ENCODE measurements at regions of chr17 and their contacts with region 1.

Region 1: GRCh38 chr17:18217412-18218015 is 7.9 kb upstream of the LLGL1 start:
- DNase-seq: peak; percentile 79
- H3K4me3 Mint-ChIP-seq: no peak overlapping the region
- H3K27ac Mint-ChIP-seq: no peak overlapping the region
- H3K4me1 Mint-ChIP-seq: no peaks in the 10 kb centered on the region
- H3K27me3 Mint-ChIP-seq: no peaks in the 10 kb centered on the region

Region 2: DNA sequence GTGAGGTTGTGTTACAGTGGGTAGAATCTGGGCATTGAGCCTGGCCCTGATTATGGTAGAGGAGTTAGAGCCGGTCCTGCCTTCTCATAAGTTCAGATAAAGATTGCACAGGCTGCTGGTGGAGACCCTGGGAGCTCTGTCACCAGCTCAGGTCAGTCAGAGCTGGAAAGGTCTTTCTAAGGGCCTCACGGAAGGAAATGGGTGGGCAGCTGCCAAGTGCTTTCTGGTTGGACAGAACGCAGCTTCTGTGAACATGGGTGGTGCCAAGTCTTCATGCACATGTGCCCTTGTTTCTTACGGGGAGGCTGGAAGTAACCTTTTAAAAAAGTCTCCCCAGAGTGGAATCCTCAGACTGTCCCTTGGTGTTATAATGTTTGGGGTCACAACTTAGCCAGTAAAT is 19.0 kb before region 1 on chr17:
- CTCF ChIA-PET with region 1: interaction called, 10 read pairs
- POLR2A ChIA-PET with region 1: no interaction called
- DNase-seq: no peak
- H3K4me3 Mint-ChIP-seq: no peak overlapping the region
- H3K27ac Mint-ChIP-seq: no peak overlapping the region
- H3K4me1 Mint-ChIP-seq: peaks cover 13% of the 10 kb centered on the region
- H3K27me3 Mint-ChIP-seq: no peaks in the 10 kb centered on the region

Region 3: DNA sequence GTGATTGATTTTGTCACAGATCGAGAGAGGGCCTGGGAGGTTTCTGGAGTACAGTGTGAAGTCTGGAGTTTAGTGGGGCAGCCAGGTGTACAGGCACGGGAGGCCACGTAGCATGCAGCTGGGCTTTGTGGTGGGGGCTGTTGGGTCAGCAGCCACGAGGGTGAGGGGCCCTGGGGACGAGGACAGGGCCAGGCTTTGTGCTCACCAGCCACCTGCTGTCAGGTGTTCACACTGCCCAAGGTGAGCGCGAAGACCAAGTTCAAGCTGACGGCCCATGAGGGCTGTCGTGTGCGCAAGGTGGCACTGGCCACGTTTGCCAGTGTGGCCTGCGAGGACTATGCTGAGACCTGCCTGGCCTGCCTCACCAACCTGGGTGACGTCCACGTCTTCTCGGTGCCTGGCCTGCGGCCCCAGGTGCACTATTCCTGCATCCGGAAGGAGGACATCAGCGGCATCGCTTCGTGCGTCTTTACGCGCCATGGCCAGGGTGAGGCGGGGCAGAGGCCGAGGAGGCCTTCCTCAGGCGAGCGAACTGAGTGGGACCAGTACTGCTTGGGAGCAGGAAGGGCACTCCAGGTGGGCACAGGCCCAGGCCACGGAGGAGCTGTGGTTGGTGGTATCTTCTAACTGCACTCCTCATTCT is 23.8 kb after region 1 on chr17:
- CTCF ChIA-PET with region 1: no interaction called
- POLR2A ChIA-PET with region 1: no interaction called
- DNase-seq: no peak
- H3K4me3 Mint-ChIP-seq: no peak overlapping the region
- H3K27ac Mint-ChIP-seq: no peak overlapping the region
- H3K4me1 Mint-ChIP-seq: no peaks in the 10 kb centered on the region
- H3K27me3 Mint-ChIP-seq: no peaks in the 10 kb centered on the region

Region 4: DNA sequence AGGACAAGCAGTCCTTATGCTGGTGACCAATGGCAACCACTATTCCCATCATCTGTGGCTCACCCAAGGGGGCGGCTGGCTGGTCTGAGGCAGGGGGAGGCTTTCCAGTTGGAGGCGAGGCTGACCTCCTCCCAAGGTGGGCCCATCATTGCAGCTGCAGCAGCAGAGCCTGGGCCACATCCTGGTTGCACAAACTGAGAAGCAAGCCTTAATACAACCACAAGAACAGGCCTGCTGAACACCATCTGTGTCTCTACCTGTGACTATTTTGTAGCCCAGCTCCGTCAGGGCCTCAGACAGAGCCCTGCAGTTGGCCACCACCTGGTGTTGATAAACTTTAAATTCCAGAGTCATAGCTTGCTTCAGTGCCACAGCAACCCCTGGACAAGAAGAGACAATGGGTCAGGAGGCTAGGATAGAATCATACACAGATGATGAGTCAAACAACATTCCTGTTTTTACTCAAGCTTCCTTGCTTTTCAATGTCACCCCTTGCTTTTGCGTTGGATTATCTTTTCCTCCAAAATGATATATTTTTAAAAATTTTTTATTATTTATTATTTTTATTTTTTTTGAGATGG is 115.5 kb after region 1 on chr17:
- CTCF ChIA-PET with region 1: no interaction called
- POLR2A ChIA-PET with region 1: no interaction called
- DNase-seq: no peak
- H3K4me3 Mint-ChIP-seq: no peak overlapping the region
- H3K27ac Mint-ChIP-seq: no peak overlapping the region
- H3K4me1 Mint-ChIP-seq: peaks cover 14% of the 10 kb centered on the region
- H3K27me3 Mint-ChIP-seq: no peaks in the 10 kb centered on the region